HEK293T (cell line): ENCODE measurements at regions of chr6 and their contacts with region 1.

Region 1: GRCh38 chr6:105317607-105318533 is 85.0 kb downstream of the PREP start:
- DNase-seq: no peak

Region 2: GRCh38 chr6:105302617-105303128 is 15.2 kb before region 1 on chr6:
- CTCF ChIA-PET with region 1: interaction called, 10 read pairs
- POLR2A ChIA-PET with region 1: no interaction called
- DNase-seq: no peak

Region 3: DNA sequence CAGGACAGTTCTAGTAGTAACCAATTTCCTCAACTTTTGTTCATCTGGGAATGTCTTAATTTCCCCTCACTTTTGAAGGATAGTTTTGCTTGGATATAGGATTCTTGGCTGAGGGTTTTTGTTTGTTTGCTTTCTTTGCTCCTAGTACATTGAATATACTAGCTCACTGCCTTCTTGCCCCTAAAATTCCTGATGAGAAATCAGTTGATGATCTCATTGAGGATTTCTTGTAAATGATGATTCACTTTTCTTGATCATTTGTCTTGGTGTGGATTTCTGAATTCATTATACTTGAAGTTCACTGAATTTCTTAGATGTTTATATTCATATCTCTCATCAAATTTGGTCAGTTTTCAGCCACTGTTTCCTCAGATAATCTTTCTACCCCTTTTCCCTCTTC is 719.2 kb after region 1 on chr6:
- CTCF ChIA-PET with region 1: no interaction called
- POLR2A ChIA-PET with region 1: no interaction called
- DNase-seq: no peak